Heart left ventricle (tissue), 16 donors: ENCODE measurements at regions of chr10 and their contacts with region 1.

Region 1: DNA sequence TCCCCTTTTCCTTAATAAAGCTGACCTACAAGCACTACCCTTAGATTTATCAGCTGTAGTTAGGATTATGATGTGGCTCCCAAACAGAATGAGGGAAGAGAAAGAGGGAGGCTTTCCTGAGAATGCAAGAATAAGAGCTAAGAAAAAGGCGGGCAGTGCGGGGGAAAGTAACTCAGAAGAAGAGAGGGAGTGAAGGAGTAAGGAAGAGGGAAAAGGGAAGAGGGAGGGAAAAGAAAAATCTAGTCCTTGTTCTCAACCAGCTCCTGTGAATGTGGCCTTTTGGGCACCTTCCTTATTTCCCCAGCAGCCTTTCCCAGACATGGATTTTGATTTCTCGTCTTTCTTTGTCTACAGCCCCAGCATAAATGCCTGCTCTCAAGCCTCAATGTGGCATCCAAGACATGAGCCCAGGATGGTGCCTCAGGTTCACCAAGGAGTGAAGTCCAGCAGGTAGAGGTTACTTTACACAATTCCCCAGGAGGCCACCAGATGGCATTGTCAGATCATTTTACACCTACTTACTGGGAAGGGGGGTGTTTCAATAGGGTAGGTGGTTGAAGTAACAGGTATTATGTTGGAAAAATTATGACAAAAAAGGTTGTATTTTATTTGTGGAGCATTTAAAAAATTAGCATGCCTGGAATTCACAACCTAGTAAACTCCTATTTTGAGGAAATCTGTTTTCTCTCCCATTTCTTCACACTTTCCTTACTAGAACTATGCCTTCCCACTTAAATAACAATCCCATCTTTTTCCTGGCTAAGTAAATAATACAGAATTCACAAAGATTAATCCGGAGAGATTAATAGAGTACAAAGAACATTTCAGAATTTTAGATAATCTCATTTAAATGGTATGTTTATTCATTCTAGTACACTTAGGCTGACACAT is 106.5 kb downstream of the HTR7 start:
- DNase-seq: no peak
- ATAC-seq: no peak
- H3K4me3 ChIP-seq: no peak overlapping the region
- H3K27ac ChIP-seq: no peak overlapping the region
- H3K4me1 ChIP-seq: no peaks in the 10 kb centered on the region
- H3K27me3 ChIP-seq: peaks cover 0 to 4% (median 0%) of the 10 kb centered on the region in 9 donors
- CTCF ChIP-seq: peak; percentile 43 to 66 (median 62)
- POLR2A ChIP-seq: no peak

Region 2: DNA sequence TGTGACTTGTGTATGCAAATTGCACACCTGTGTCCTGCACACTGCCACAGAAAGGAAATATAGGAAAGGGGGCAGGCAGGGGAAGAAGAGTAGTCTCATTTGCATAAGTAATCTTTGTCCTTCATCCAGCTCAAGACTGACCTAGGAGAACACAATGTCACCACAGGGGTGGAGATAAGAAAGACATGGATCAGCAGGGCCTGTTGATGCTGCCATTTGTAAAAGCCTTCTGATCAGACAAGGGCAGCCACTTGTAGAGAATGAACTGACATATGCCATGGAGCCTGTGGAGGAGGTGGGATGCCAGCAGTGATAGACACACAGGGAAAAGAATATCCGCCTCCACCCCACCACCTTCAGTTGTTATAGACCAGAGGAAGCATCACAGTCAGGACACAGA is 422.5 kb before region 1 on chr10:
- intact Hi-C with region 1: no loop called
- DNase-seq: no peak
- ATAC-seq: no peak
- H3K4me3 ChIP-seq: no peak overlapping the region
- H3K27ac ChIP-seq: no peak overlapping the region
- H3K4me1 ChIP-seq: no peaks in the 10 kb centered on the region
- H3K27me3 ChIP-seq: no peaks in the 10 kb centered on the region
- CTCF ChIP-seq: no peak
- POLR2A ChIP-seq: no peak

Region 3: DNA sequence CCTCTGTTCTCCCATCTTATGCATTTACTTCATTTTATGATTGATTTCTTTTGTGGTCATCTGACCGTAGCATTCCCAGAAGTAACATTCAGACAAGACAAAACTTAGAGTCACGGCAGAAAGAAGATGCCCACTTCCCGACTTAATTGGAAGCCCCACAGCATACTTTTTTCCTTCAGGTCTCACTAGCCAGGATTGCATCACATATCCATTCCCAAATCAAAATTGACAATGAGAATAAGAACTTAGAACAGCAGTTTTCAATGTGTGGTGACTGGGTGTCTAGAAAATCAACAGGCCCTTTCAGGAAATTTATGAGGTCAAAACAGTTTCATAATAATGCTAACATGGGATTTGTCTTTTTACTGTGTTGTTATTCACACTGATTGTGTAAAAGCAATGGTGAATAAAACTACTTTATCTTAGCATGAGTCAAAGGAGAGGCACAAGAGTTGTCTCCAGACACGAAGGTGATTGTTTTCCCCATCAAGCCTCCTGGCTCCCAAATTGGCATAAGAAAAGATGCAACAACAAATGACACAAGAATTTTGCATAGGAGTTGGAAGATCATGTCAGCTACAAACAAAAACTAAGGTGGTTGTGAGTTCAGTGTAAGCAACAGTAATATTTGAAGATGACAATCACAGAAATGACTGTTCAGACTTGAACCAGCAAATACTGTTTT is 387.4 kb before region 1 on chr10:
- intact Hi-C with region 1: no loop called
- DNase-seq: no peak
- ATAC-seq: no peak
- H3K4me3 ChIP-seq: no peak overlapping the region
- H3K27ac ChIP-seq: no peak overlapping the region
- H3K4me1 ChIP-seq: no peaks in the 10 kb centered on the region
- H3K27me3 ChIP-seq: no peaks in the 10 kb centered on the region
- CTCF ChIP-seq: no peak
- POLR2A ChIP-seq: no peak

Region 4: DNA sequence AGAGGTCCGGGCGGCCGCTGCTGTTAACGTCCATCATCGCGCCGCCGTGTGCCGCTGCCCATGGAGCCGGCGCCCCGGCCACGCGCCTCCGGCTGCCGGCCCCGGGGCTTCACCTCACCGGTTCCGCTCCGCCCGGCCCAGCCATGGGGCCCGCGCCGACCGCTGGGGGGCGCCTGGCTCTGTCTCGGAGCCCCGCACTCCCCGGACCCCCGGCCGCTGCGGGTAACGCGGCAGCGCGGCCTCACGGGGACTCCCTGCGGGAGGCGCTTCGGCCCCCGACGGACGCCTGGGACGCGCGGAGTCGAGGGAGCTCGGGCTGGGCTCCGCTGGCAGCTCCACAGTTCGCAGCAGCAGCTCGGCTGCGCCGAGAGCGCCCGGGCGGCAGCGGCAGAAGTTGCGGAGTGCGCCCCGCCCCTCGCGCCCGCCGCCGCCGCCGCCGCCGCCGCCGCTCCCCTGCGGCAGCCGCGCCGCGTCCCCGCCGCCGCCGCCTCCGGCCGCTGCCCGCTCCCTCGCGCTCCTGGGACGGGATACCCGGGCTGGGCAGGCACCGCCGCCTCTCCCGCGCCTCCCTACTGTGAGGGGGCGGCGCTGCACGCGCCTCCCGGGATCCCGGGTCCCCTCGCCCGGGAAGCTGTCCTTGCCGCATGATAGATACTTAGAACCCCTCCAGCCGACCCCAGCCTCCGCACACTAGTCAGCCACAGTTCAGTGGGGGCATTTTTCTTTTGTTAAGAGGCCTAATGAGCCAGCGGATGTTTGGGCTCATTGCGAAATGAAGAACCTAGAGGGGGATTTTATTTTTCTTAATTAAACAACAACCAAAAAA is 106.5 kb after region 1 on chr10 and contains the start of gene HTR7:
- intact Hi-C with region 1: loop called in 9 of 10 experiments (anchors 2 to 10 kb)
- DNase-seq: peak; percentile 51 to 85 (median 63)
- ATAC-seq: peak in 3 of 4 donors; percentile 66 to 91 (median 88)
- H3K4me3 ChIP-seq: peak within 1 kb of the TSS; percentile 45 to 83 (median 64)
- H3K27ac ChIP-seq: peak within 1 kb of the TSS in 5 of 12 donors; percentile 17 to 79 (median 60)
- H3K4me1 ChIP-seq: peaks cover 0 to 23% (median 5%) of the 10 kb centered on the region in 12 donors
- H3K27me3 ChIP-seq: peaks cover 12 to 46% (median 43%) of the 10 kb centered on the region in 9 donors
- CTCF ChIP-seq: peak in 11 of 12 donors; percentile 24 to 75 (median 61)
- POLR2A ChIP-seq: no peak
- total RNA-seq, gene HTR7: 0.10 to 0.66 (median 0.26) TPM in 6 of 9 donors, not detected in the others

Region 5: GRCh38 chr10:90862908-90863514 is 111.7 kb after region 1 on chr10:
- intact Hi-C with region 1: loop called in 9 of 10 experiments (anchors 2 to 10 kb)
- DNase-seq: no peak
- ATAC-seq: no peak
- H3K4me3 ChIP-seq: no peak overlapping the region
- H3K27ac ChIP-seq: no peak overlapping the region
- H3K4me1 ChIP-seq: peaks cover 0 to 12% (median 0%) of the 10 kb centered on the region in 12 donors
- H3K27me3 ChIP-seq: peaks cover 0 to 12% (median 0%) of the 10 kb centered on the region in 9 donors
- CTCF ChIP-seq: peak; percentile 36 to 67 (median 56)
- POLR2A ChIP-seq: no peak